AG04450 (cell line): ENCODE measurements at regions of chr4 and their contacts with region 1.

Region 1: DNA sequence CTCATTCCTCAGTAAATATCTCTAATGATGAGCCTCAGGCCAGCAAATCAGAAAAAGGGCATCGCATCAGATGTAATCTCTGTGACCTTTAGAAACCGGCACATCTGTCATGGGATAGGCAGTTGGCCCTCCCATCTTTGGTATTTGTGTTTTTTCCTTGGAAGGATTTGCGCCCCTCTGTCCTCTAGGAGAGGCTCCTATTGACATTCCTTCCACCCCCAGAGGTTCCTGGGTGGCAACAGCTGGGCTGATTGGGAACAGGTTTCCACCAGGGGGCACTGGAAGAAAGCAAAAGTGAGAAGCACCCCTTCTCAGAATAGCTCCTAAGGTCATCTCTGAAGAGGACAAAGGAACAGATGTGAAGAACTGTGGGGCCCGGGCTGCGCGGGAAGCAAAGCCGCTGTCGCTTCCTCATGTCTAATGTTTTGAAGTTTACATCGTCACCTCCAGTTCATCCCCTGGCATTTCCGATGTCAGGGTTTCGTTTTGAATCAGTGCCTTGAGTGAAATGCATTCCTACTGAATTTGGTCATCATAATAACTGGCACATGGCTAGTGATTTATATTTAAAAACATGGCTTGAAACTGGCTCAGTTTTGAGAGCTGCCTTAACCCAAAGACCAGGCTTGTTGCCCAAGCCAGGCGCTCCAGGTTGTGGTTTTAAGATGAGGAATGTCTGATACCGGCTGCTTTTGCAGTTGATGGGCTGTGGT is 6.2 kb downstream of the TXK start:
- DNase-seq: peak; percentile 76
- H3K4me3 ChIP-seq: peak overlapping the region; percentile 22
- H3K27ac ChIP-seq: peak overlapping the region; percentile 52
- H3K27me3 ChIP-seq: peaks cover 3% of the 10 kb centered on the region
- CTCF ChIP-seq: peak; percentile 66

Region 2: DNA sequence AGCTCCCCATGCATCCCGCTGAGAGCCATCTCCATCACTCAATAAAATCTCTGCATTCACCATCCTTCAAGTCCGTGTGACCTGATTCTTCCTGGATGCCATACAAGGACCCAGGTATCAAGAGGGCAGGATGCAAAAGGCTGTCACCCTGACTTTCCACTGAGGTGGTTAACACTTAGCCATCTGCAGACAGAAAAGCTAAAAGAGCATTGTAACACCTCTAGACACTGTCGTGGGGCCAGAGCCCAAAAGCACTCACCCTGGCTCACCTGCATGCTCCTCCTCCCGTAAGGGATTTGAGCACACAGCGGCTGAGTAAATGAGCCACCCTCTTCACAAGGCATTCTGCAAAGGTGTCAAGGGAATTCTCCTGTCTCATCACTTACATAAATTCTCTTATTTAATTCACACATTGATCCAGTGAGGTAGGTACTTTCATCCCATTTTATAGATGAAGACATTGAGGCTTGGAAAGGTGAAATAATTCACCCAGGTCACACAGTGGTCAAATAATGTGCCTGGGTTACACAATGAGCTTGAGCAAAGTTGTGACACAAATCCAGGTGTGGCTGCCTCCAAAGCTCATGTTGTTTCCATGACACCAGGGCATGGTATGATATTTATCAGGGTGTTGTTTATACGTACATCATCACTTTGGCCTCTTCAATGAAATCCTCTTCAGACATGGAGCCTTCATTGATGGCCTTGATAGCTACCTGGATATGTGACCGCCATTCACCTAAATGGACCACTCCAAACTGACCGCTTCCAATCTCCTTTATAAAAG is 41.8 kb before region 1 on chr4:
- CTCF ChIA-PET with region 1: interaction called, 11 read pairs
- POLR2A ChIA-PET with region 1: no interaction called
- DNase-seq: no peak
- H3K4me3 ChIP-seq: no peak overlapping the region
- H3K27ac ChIP-seq: no peak overlapping the region
- H3K27me3 ChIP-seq: peaks cover 2% of the 10 kb centered on the region
- CTCF ChIP-seq: no peak

Region 3: DNA sequence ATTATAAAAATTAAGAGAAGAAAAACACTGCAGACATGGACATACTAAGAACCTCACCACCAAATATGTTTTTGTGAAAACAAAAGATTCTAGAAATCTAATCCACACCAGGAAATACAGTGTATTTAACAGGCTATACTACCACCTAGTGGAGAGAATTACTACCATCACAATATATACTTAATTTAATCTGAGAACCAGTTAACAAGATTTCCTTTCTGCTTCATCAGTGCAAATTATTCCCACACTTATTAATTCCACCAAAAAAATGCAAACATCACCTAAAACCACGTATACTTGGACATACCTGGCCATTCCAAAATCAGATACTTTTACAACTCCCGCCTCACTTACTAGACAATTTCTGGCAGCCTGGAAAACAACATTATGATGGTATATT is 13.2 kb after region 1 on chr4:
- CTCF ChIA-PET with region 1: interaction called, 38 read pairs
- POLR2A ChIA-PET with region 1: interaction called, 5 read pairs
- DNase-seq: peak; percentile 8
- H3K4me3 ChIP-seq: no peak overlapping the region
- H3K27ac ChIP-seq: no peak overlapping the region
- H3K27me3 ChIP-seq: no peaks in the 10 kb centered on the region
- CTCF ChIP-seq: peak; percentile 58

Region 4: DNA sequence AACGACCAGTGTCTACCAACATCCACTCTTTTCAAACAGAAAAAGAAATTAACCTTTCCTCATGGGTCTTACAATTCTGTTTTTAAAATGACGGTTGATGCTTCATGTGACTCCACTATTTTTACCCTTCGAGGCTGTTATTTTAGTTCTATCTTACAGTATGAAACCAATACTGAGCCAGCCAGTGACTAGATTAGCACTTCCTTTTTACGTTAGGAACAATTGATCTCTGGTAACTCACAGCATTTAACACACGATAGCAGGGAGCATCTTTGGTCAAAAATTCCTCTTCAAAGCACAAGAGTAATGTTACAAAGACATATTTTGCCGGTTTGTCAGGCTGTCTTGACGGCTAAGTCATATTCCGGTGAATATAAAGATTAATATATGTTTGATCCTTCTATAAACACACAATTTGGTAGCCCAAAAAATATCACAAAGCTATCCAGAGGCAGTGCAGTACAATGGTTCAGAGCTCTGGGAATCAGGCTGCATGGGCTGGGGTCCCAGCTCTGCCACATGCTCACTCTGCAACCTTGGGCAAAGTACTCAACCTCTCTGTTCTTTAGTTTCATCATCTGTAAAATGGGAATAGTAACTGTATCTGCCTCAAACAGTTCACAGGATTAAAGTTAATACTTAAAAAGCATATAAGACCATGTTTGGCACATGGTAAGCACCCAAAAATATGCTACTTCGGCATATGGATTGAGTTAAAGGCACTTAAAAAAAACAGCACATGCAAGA is 69.1 kb after region 1 on chr4:
- CTCF ChIA-PET with region 1: no interaction called
- POLR2A ChIA-PET with region 1: no interaction called
- DNase-seq: no peak
- H3K4me3 ChIP-seq: no peak overlapping the region
- H3K27ac ChIP-seq: no peak overlapping the region
- H3K27me3 ChIP-seq: peaks cover 5% of the 10 kb centered on the region
- CTCF ChIP-seq: no peak

Region 5: GRCh38 chr4:48307528-48307927 is 179.7 kb after region 1 on chr4:
- CTCF ChIA-PET with region 1: no interaction called
- POLR2A ChIA-PET with region 1: interaction called, 12 read pairs
- DNase-seq: no peak
- H3K4me3 ChIP-seq: no peak overlapping the region
- H3K27ac ChIP-seq: no peak overlapping the region
- H3K27me3 ChIP-seq: no peaks in the 10 kb centered on the region
- CTCF ChIP-seq: no peak

Region 6: DNA sequence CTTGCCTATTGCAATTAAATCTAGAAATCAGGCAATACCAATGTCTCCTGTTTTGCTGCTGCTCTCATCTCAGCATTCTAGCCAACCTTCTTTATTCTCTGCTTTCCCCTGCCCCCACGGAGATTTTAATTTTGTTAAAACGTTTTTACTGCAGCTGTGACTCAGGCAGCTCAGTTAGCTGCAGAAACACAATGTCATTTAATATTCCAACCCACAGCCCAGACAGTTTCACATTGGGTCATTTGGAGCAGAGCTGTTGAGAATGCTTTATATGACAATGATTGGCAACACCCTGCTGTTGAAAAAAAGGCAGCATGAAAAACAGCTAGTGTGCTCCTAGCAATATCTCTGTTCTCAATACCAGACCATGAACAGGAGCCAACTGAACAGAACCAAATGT is 342.7 kb after region 1 on chr4:
- CTCF ChIA-PET with region 1: no interaction called
- POLR2A ChIA-PET with region 1: no interaction called
- DNase-seq: no peak
- H3K4me3 ChIP-seq: no peak overlapping the region
- H3K27ac ChIP-seq: no peak overlapping the region
- H3K27me3 ChIP-seq: peaks cover 2% of the 10 kb centered on the region
- CTCF ChIP-seq: no peak